H1 (cell line): ENCODE measurements at regions of chr5 and their contacts with region 1.

Region 1: GRCh38 chr5:133868946-133869518 is 99.4 kb downstream of the C5orf15 start:
- DNase-seq: peak in 1 of 2 experiments; percentile 77
- H3K4me3 ChIP-seq: no peak overlapping the region
- H3K27ac ChIP-seq: no peak overlapping the region
- H3K4me1 ChIP-seq: peaks cover 0 to 3% (median 0%) of the 10 kb centered on the region in 4 experiments; a peak in 3 of 7 replicates
- H3K27me3 ChIP-seq: no peaks in the 10 kb centered on the region
- CTCF ChIP-seq: peak; percentile 63 to 82 (median 73)
- EP300 ChIP-seq: no peak
- POLR2A ChIP-seq: no peak
- RAD21 ChIP-seq: peak; percentile 72 to 79

Region 2: DNA sequence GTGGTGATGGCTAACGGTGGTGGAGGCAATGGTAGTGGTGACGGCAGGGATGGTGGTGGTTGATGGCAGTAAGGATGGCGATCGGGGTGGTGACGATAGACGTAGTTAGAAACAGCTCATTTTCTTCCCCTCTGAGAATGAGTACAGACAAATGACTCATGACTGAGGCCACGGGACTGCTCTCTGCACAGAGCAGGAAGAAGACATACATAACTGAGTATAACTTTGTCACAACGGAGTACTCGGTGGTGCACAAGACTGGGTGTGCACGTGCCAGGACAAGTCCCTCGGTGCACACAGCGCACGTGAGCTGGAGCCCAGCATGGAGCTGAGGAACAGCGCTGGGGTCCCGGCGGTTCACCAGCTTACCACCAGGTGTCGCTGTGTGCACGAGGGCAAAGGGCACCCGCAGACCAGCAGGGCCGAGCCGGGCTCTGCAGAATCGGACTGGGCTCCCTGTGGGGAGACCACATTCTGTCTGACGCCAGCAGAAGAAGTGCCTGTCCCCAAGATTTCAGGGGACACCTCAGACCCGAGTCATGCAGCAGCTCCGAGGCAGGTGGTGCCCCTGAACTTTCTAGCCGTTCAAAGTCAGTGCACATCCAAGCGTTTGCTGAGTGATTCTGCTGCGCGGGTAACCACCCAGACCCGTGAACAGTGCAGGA is 445.3 kb before region 1 on chr5:
- CTCF ChIA-PET with region 1: interaction called, 14 read pairs
- POLR2A ChIA-PET with region 1: no interaction called
- DNase-seq: peak; percentile 53 to 97
- H3K4me3 ChIP-seq: no peak overlapping the region
- H3K27ac ChIP-seq: no peak overlapping the region
- H3K4me1 ChIP-seq: peaks cover 8 to 27% (median 18%) of the 10 kb centered on the region in 4 experiments
- H3K27me3 ChIP-seq: peaks cover 3 to 10% (median 7%) of the 10 kb centered on the region in 4 experiments
- CTCF ChIP-seq: peak; percentile 93 to 95 (median 94)
- EP300 ChIP-seq: no peak
- POLR2A ChIP-seq: no peak
- RAD21 ChIP-seq: peak; percentile 86 to 91

Region 3: GRCh38 chr5:133688391-133688790 is 180.6 kb before region 1 on chr5:
- CTCF ChIA-PET with region 1: no interaction called
- POLR2A ChIA-PET with region 1: no interaction called
- DNase-seq: no peak
- H3K4me3 ChIP-seq: no peak overlapping the region
- H3K27ac ChIP-seq: no peak overlapping the region
- H3K4me1 ChIP-seq: no peaks in the 10 kb centered on the region
- H3K27me3 ChIP-seq: no peaks in the 10 kb centered on the region
- CTCF ChIP-seq: no peak
- EP300 ChIP-seq: no peak
- POLR2A ChIP-seq: no peak
- RAD21 ChIP-seq: no peak

Region 4: DNA sequence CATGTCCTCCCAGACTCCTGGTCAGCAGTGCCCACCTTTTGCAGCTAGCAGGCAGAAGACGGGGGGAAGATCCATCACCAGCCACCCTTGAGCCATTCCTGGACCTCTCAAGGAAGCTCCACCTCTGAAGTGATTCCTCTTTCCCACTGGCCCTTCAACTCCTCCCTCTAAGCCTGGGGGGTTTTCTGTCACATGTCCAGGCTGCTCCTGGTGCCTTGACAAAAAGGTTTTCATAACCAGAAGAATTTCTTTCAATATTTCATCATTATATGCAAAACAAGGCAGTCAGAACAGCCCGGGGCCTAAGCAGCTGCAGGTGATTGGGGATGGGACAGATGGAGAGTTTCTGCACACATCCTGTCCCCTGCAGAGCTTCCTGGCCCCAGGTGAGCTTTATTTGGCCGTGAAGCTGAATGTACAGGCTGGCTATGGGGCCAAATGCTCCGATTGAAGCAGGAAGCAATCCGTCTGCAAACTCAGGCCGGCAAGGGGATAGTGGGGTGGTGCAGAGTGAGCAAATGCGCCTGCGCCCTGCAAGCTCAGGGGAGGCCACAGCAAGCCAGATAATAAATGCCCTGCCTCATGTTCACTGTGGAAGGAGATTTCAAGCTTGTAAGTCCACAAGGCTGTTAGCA is 74.1 kb before region 1 on chr5:
- CTCF ChIA-PET with region 1: interaction called, 16 read pairs
- POLR2A ChIA-PET with region 1: no interaction called
- DNase-seq: no peak
- H3K4me3 ChIP-seq: no peak overlapping the region
- H3K27ac ChIP-seq: no peak overlapping the region; the same call in 1 of the 2 replicates
- H3K4me1 ChIP-seq: peaks cover 0 to 5% (median 0%) of the 10 kb centered on the region in 4 experiments; a peak in 1 of 7 replicates
- H3K27me3 ChIP-seq: no peaks in the 10 kb centered on the region
- CTCF ChIP-seq: no peak
- EP300 ChIP-seq: no peak
- POLR2A ChIP-seq: no peak
- RAD21 ChIP-seq: no peak

Region 5: DNA sequence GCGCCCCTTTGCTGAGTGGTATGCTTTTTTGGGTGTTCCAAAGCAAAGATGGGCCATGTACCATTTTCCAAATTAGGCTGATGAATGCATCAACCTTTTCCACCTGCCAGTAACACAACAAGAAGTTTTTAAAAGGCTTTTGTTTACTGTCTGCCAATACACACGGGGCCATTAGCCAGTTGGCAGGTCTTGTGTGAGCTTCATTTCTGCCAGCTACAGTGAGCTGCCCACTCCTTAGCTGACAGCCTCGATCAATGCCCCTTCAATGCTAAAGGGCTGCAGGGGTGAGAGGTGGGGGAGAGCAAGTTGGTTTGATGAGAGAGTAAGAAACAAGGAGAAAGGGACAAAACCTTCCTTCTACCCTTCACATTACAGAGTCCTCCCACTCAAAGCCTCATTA is 29.3 kb before region 1 on chr5:
- CTCF ChIA-PET with region 1: interaction called, 12 read pairs
- POLR2A ChIA-PET with region 1: no interaction called
- DNase-seq: no peak
- H3K4me3 ChIP-seq: no peak overlapping the region
- H3K27ac ChIP-seq: no peak overlapping the region
- H3K4me1 ChIP-seq: no peaks in the 10 kb centered on the region
- H3K27me3 ChIP-seq: no peaks in the 10 kb centered on the region
- CTCF ChIP-seq: no peak
- EP300 ChIP-seq: no peak
- POLR2A ChIP-seq: no peak
- RAD21 ChIP-seq: no peak

Region 6: DNA sequence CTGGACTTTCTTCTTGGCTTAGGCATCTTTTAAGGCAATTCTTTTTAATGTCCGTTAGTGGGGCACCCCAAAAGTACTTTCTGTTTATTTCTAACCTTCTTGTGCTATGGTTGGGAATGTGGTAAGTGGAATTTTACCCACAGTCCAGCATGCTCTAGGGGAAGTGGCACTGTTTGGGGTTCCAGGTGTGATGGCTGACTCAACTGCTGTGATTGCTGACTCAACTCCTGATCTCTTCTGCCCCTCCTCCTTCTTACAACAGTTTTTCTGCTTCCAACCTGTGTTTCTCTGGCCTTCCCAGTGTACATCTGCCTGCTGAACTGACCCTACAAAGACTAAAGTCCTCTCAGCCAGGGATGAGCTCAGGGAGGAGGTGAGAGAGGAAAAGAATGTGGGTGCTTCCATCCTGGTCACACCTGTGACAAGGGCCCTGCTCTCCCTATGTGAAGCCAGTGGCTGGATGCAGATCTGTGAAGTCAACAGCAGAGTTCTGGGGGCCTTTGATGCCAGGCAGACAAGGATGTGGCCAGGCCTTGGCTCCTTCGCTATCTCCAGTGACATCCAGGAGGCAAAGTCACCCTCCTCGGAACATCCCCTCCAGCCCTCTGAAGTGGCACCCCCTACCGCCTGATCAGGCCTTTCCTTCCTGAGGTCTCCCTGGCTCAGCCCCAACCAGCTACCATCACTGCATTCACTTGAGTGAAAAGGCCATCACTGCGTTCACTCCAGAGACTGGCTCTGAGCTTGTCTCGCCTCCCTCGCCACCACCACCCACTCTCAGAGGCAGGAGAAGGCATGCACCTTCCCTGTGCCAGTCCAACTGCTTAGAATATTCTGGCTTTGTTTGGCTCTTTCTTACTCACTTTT is 27.2 kb after region 1 on chr5:
- CTCF ChIA-PET with region 1: interaction called, 12 read pairs
- POLR2A ChIA-PET with region 1: no interaction called
- DNase-seq: no peak
- H3K4me3 ChIP-seq: no peak overlapping the region
- H3K27ac ChIP-seq: no peak overlapping the region
- H3K4me1 ChIP-seq: no peaks in the 10 kb centered on the region
- H3K27me3 ChIP-seq: no peaks in the 10 kb centered on the region; a peak in 1 of 7 replicates
- CTCF ChIP-seq: no peak
- EP300 ChIP-seq: no peak
- POLR2A ChIP-seq: no peak
- RAD21 ChIP-seq: no peak

Region 7: GRCh38 chr5:133944263-133945185 is 75.5 kb after region 1 on chr5:
- CTCF ChIA-PET with region 1: interaction called, 74 read pairs
- POLR2A ChIA-PET with region 1: no interaction called
- DNase-seq: peak in 1 of 2 experiments; percentile 85
- H3K4me3 ChIP-seq: no peak overlapping the region
- H3K27ac ChIP-seq: no peak overlapping the region
- H3K4me1 ChIP-seq: no peaks in the 10 kb centered on the region
- H3K27me3 ChIP-seq: no peaks in the 10 kb centered on the region
- CTCF ChIP-seq: peak; percentile 84 to 98 (median 92)
- EP300 ChIP-seq: no peak
- POLR2A ChIP-seq: no peak
- RAD21 ChIP-seq: peak; percentile 97 to 98

Region 8: DNA sequence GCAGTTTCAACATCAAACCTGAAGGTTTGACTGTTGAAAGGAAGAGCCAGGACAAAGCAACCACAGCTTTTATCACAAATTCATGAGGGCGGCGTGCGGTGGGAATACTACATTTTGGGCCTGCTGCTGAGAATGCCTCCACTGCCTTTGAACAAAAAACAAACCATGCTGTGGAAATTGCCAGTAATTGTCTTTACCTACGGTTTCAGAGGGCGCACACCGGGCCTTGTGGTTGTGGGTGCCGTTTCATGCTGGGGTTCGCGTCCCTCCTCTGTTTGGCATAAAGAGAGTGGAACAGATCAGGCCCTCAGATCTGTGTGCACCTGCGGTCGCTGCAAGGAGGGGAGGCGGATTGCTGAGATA is 217.9 kb after region 1 on chr5:
- CTCF ChIA-PET with region 1: no interaction called
- POLR2A ChIA-PET with region 1: no interaction called
- DNase-seq: no peak
- H3K4me3 ChIP-seq: no peak overlapping the region
- H3K27ac ChIP-seq: no peak overlapping the region
- H3K4me1 ChIP-seq: peaks cover 0 to 6% (median 1%) of the 10 kb centered on the region in 4 experiments; a peak in 4 of 7 replicates
- H3K27me3 ChIP-seq: peaks cover 0 to 2% (median 0%) of the 10 kb centered on the region in 4 experiments; a peak in 1 of 7 replicates
- CTCF ChIP-seq: no peak
- EP300 ChIP-seq: no peak
- POLR2A ChIP-seq: no peak
- RAD21 ChIP-seq: no peak